CD4-positive, alpha-beta memory T cell (primary cell): ENCODE measurements at regions of chr7 and their contacts with region 1.

Region 1: GRCh38 chr7:156969972-156970420 is 20.5 kb downstream of the NOM1 start:
- DNase-seq: peak in 4 of 5 donors; percentile 12 to 27 (median 24)
- H3K4me3 ChIP-seq: no peak overlapping the region
- H3K4me3 Mint-ChIP-seq: no peak overlapping the region
- H3K27ac ChIP-seq: no peak overlapping the region
- H3K27ac Mint-ChIP-seq: peak overlapping the region in 1 of 7 donors; percentile 67
- H3K4me1 ChIP-seq: no peaks in the 10 kb centered on the region
- H3K4me1 Mint-ChIP-seq: no peaks in the 10 kb centered on the region
- H3K27me3 ChIP-seq: no peaks in the 10 kb centered on the region
- H3K27me3 Mint-ChIP-seq: no peaks in the 10 kb centered on the region

Region 2: GRCh38 chr7:155947051-155947450 is 1022.9 kb before region 1 on chr7:
- CTCF ChIA-PET with region 1: no interaction called
- POLR2A ChIA-PET with region 1: no interaction called
- intact Hi-C with region 1: no loop called
- DNase-seq: no peak
- H3K4me3 ChIP-seq: no peak overlapping the region
- H3K4me3 Mint-ChIP-seq: no peak overlapping the region
- H3K27ac ChIP-seq: no peak overlapping the region
- H3K27ac Mint-ChIP-seq: no peak overlapping the region
- H3K4me1 ChIP-seq: no peaks in the 10 kb centered on the region
- H3K4me1 Mint-ChIP-seq: no peaks in the 10 kb centered on the region
- H3K27me3 ChIP-seq: no peaks in the 10 kb centered on the region
- H3K27me3 Mint-ChIP-seq: peaks cover 0 to 4% of the 10 kb centered on the region in 2 donors

Region 3: GRCh38 chr7:156845379-156846101 is 124.5 kb before region 1 on chr7:
- CTCF ChIA-PET with region 1: no interaction called
- POLR2A ChIA-PET with region 1: no interaction called
- intact Hi-C with region 1: no loop called
- DNase-seq: no peak
- H3K4me3 ChIP-seq: no peak overlapping the region
- H3K4me3 Mint-ChIP-seq: peak overlapping the region in 1 of 8 donors; percentile 17
- H3K27ac ChIP-seq: no peak overlapping the region
- H3K27ac Mint-ChIP-seq: peak overlapping the region in 1 of 7 donors; percentile 7
- H3K4me1 ChIP-seq: peaks cover 3% of the 10 kb centered on the region
- H3K4me1 Mint-ChIP-seq: peaks cover 25 to 47% (median 34%) of the 10 kb centered on the region in 4 donors
- H3K27me3 ChIP-seq: no peaks in the 10 kb centered on the region
- H3K27me3 Mint-ChIP-seq: no peaks in the 10 kb centered on the region

Region 4: GRCh38 chr7:156903232-156903909 is 66.6 kb before region 1 on chr7:
- CTCF ChIA-PET with region 1: no interaction called
- POLR2A ChIA-PET with region 1: no interaction called
- intact Hi-C with region 1: loop called (anchors 2 kb)
- DNase-seq: peak; percentile 29 to 67 (median 37)
- H3K4me3 ChIP-seq: no peak overlapping the region
- H3K4me3 Mint-ChIP-seq: peak overlapping the region in 4 of 8 donors; percentile 39 to 61 (median 49)
- H3K27ac ChIP-seq: no peak overlapping the region
- H3K27ac Mint-ChIP-seq: peak overlapping the region; percentile 8 to 79 (median 59)
- H3K4me1 ChIP-seq: peaks cover 13% of the 10 kb centered on the region
- H3K4me1 Mint-ChIP-seq: peaks cover 7 to 13% (median 10%) of the 10 kb centered on the region in 4 donors
- H3K27me3 ChIP-seq: no peaks in the 10 kb centered on the region
- H3K27me3 Mint-ChIP-seq: peaks cover 0 to 4% of the 10 kb centered on the region in 2 donors

Region 5: GRCh38 chr7:157116762-157117161 is 146.8 kb after region 1 on chr7:
- CTCF ChIA-PET with region 1: no interaction called
- POLR2A ChIA-PET with region 1: no interaction called
- intact Hi-C with region 1: loop called (anchors 10 kb)
- DNase-seq: no peak
- H3K4me3 ChIP-seq: no peak overlapping the region
- H3K4me3 Mint-ChIP-seq: no peak overlapping the region
- H3K27ac ChIP-seq: no peak overlapping the region
- H3K27ac Mint-ChIP-seq: no peak overlapping the region
- H3K4me1 ChIP-seq: no peaks in the 10 kb centered on the region
- H3K4me1 Mint-ChIP-seq: no peaks in the 10 kb centered on the region
- H3K27me3 ChIP-seq: no peaks in the 10 kb centered on the region
- H3K27me3 Mint-ChIP-seq: peaks cover 7% of the 10 kb centered on the region in 2 donors

Region 6: DNA sequence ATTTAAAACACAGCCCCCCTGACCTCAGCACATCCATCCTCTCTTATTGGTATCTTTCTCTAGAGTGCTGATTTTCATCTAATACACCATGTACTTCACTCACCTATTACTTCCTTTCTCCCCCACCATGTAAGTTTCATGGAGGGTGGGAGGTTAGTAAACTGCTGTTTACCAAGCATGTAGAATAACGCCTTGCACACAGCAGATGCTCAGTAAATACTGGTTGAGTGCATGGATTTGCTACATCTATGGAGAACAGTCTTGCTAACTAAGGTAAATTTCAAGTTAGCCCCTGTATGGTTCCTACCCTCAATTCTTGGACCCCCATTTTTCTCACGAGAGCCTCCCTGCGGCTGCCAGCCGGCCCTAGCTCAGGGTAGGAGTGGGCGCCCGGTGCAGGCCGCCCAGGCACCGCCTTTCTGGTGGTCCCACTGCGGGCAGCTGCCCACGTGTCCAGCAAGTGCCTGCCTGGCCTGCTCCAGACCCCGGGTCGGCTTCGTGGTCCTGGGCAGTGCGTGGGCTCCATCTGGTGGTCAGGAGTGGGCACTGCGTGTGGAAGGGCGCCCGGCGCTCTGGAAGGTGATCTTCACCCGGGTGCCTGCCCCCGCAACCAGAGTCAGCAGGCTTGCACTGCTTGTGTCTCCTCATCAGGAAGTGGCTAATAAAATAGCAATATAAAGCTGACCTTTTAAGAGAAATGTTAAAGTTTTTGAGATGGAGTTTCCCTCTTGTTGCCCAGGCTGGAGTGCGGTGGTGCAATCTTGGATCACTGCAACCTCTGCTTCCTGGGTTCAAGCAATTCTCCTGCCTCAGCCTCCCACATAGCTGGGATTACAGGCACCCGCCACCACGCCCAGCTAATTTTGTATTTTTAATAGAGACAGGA is 303.5 kb after region 1 on chr7:
- CTCF ChIA-PET with region 1: interaction called, 7 read pairs
- POLR2A ChIA-PET with region 1: no interaction called
- intact Hi-C with region 1: loop called (anchors 5 kb)
- DNase-seq: peak; percentile 43 to 63 (median 51)
- H3K4me3 ChIP-seq: no peak overlapping the region
- H3K4me3 Mint-ChIP-seq: peak overlapping the region in 2 of 8 donors; percentile 2 to 23
- H3K27ac ChIP-seq: no peak overlapping the region
- H3K27ac Mint-ChIP-seq: peak overlapping the region in 6 of 7 donors; percentile 37 to 85 (median 44)
- H3K4me1 ChIP-seq: peaks cover 37% of the 10 kb centered on the region
- H3K4me1 Mint-ChIP-seq: peaks cover 21 to 43% (median 31%) of the 10 kb centered on the region in 4 donors
- H3K27me3 ChIP-seq: no peaks in the 10 kb centered on the region
- H3K27me3 Mint-ChIP-seq: peaks cover 1 to 7% of the 10 kb centered on the region in 2 donors

Region 7: GRCh38 chr7:157386979-157387800 is 417.2 kb after region 1 on chr7:
- CTCF ChIA-PET with region 1: no interaction called
- POLR2A ChIA-PET with region 1: no interaction called
- intact Hi-C with region 1: loop called (anchors 2 kb)
- DNase-seq: peak; percentile 83 to 94 (median 85)
- H3K4me3 ChIP-seq: no peak overlapping the region
- H3K4me3 Mint-ChIP-seq: peak overlapping the region in 7 of 8 donors; percentile 29 to 69 (median 37)
- H3K27ac ChIP-seq: peak overlapping the region; percentile 35
- H3K27ac Mint-ChIP-seq: peak overlapping the region; percentile 77 to 96 (median 86)
- H3K4me1 ChIP-seq: peaks cover 44% of the 10 kb centered on the region
- H3K4me1 Mint-ChIP-seq: peaks cover 31 to 51% (median 40%) of the 10 kb centered on the region in 4 donors
- H3K27me3 ChIP-seq: no peaks in the 10 kb centered on the region
- H3K27me3 Mint-ChIP-seq: no peaks in the 10 kb centered on the region